ENCODE measurements at regions of chr9 and their contacts with region 1.

Region 1: GRCh38 chr9:19379697-19380046 is 364 bp downstream of the RPS6 start:
- DNase-seq: peak; percentile 16
- ATAC-seq: peak; percentile 28
- H3K4me3 ChIP-seq: peak overlapping the region; percentile 78
- H3K27ac ChIP-seq: peak overlapping the region; percentile 88
- H3K4me1 ChIP-seq: peaks cover 2% of the 10 kb centered on the region; the same call in 1 of the 2 replicates
- H3K27me3 ChIP-seq: no peaks in the 10 kb centered on the region
- CTCF ChIP-seq: no peak
- POLR2A ChIP-seq: no peak
- RAD21 ChIP-seq: no peak

Region 2: GRCh38 chr9:18806232-18807080 is 573.2 kb before region 1 on chr9:
- CTCF ChIA-PET with region 1: no interaction called
- POLR2A ChIA-PET with region 1: no interaction called
- dilution Hi-C with region 1: no loop called
- in situ Hi-C with region 1: no loop called
- intact Hi-C with region 1: no loop called
- DNase-seq: no peak
- ATAC-seq: no peak
- H3K4me3 ChIP-seq: no peak overlapping the region
- H3K27ac ChIP-seq: no peak overlapping the region
- H3K4me1 ChIP-seq: no peaks in the 10 kb centered on the region
- H3K27me3 ChIP-seq: no peaks in the 10 kb centered on the region
- CTCF ChIP-seq: no peak
- POLR2A ChIP-seq: no peak
- RAD21 ChIP-seq: no peak

Region 3: DNA sequence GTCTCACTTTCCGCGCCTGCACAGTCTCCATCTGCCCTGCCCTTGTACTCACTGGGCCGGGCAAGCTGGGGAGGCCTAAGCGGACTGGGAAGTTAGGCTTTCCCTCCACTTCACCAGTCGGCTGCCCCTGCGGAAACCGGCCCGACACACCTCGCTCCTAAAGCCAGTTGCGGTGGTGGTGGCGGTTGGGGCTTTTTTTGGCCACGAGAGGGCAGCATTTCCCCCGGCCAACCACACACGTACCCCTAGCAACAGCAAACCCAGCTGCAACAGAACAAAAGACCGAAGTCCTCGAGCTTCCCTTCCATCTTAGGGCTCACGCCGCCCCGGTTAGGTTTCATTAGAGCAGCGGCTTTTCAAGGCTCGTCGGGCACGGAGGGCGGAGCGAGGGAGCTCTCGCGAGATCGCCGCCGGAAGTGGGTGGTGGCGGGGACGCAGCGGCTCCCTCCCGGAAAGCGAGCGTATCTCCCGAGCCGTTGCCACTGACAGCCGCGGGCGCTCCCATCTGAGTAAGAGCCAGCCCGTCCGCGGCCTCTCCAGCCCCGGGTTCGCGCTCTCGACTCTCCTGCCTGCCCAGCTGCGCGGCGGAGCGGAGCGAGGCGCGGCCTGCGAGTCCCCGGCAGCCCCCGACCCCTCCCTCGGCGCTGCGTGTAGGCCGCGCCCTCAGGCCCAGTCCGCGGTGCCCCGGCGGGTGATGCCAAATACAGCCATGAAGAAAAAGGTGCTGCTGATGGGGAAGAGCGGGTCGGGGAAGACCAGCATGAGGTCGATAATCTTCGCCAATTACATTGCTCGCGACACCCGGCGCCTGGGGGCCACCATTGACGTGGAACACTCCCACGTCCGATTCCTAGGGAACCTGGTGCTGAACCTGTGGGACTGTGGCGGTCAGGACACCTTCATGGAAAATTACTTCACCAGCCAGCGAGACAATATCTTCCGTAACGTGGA is 330.4 kb before region 1 on chr9 and contains the start of gene RRAGA:
- CTCF ChIA-PET with region 1: no interaction called
- POLR2A ChIA-PET with region 1: no interaction called
- dilution Hi-C with region 1: no loop called
- in situ Hi-C with region 1: no loop called
- intact Hi-C with region 1: loop called (anchors 2 kb)
- DNase-seq: peak; percentile 96
- ATAC-seq: peak; percentile 93
- H3K4me3 ChIP-seq: peak within 1 kb of the TSS; percentile 74
- H3K27ac ChIP-seq: peak within 1 kb of the TSS; percentile 96
- H3K4me1 ChIP-seq: peaks cover 2% of the 10 kb centered on the region; the same call in 1 of the 2 replicates
- H3K27me3 ChIP-seq: no peaks in the 10 kb centered on the region
- CTCF ChIP-seq: peak; percentile 89
- POLR2A ChIP-seq: peak; percentile 97
- RAD21 ChIP-seq: peak; percentile 62
- total RNA-seq, gene RRAGA: 63.3 and 74.7 TPM in 2 replicates

Region 4: DNA sequence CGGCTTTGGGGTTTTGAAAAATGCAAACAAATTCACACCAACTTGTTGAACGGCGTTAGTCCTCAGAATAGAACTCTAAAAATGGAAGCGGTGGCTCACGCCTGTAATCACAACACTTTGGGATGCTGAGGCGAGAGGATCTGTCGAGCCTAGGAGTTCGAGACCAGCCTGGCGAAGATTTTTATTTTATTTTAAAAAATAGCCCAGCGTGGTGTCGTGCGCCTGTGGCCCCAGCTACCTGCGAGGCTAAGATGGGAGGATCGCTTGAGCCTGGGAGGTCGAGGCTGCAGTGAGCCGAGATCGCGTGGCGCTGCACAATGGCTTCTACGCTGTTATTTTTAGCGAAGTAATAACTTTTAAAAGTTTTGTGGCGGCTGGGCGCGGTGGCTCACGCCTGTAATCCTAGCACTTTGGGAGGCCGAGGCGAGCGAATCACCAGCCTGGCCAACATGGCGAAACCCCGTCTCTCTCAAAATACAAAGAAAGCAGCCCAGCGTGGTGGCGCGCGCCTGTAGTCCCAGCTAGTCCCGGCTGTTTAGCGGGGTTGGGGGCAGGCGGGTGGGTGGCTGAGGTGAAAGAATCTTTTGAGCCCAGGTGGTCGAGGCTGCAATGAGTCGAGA is 251.7 kb before region 1 on chr9:
- CTCF ChIA-PET with region 1: no interaction called
- POLR2A ChIA-PET with region 1: no interaction called
- dilution Hi-C with region 1: no loop called
- in situ Hi-C with region 1: no loop called
- intact Hi-C with region 1: loop called (anchors 10 kb)
- DNase-seq: no peak
- ATAC-seq: peak; percentile 27
- H3K4me3 ChIP-seq: peak overlapping the region; percentile 65
- H3K27ac ChIP-seq: peak overlapping the region; percentile 72
- H3K4me1 ChIP-seq: peaks cover 16% of the 10 kb centered on the region
- H3K27me3 ChIP-seq: no peaks in the 10 kb centered on the region
- CTCF ChIP-seq: no peak
- POLR2A ChIP-seq: no peak
- RAD21 ChIP-seq: no peak

Region 5: DNA sequence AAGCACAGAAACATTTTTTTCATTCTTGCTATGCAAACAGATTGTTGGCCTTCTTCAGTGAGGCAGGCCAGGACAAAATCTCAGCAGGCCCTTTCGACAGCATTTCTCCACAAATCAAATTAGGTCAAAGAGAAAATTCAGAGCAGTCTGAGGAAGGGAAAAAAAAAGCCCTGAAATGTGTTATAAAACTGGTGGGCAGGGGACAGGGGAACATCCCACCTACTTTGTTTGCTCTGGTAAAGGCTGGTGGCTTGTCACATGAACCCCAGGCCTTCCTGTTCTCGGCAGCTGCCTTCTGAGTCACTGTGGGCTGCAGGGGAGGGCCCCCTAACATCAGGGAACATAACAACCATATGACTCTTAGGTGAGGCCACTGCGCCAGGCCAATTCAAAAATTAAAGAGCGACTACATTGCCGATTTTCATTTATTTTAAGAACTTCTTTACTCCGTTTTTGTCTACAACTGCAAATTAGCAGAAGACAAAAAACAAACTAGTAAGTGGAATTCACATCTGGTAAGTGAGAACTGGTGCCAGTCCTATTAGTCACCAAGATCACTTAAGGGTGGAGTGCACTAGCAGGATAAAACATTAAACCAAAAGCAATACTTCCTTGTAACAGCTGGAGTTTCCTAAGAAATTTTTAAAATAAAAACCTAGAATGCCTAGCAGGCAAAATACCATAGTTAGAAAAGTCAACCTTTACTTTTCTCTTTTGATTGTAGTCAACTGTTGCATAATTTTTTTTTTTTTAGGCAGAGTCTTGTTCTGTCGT is 195.3 kb before region 1 on chr9:
- CTCF ChIA-PET with region 1: no interaction called
- POLR2A ChIA-PET with region 1: no interaction called
- dilution Hi-C with region 1: no loop called
- in situ Hi-C with region 1: no loop called
- intact Hi-C with region 1: loop called (anchors 5 kb)
- DNase-seq: peak; percentile 90
- ATAC-seq: peak; percentile 96
- H3K4me3 ChIP-seq: no peak overlapping the region; the same call in 1 of the 2 replicates
- H3K27ac ChIP-seq: peak overlapping the region; percentile 97
- H3K4me1 ChIP-seq: peaks cover 13% of the 10 kb centered on the region
- H3K27me3 ChIP-seq: no peaks in the 10 kb centered on the region
- CTCF ChIP-seq: no peak
- POLR2A ChIP-seq: no peak
- RAD21 ChIP-seq: no peak

Region 6: DNA sequence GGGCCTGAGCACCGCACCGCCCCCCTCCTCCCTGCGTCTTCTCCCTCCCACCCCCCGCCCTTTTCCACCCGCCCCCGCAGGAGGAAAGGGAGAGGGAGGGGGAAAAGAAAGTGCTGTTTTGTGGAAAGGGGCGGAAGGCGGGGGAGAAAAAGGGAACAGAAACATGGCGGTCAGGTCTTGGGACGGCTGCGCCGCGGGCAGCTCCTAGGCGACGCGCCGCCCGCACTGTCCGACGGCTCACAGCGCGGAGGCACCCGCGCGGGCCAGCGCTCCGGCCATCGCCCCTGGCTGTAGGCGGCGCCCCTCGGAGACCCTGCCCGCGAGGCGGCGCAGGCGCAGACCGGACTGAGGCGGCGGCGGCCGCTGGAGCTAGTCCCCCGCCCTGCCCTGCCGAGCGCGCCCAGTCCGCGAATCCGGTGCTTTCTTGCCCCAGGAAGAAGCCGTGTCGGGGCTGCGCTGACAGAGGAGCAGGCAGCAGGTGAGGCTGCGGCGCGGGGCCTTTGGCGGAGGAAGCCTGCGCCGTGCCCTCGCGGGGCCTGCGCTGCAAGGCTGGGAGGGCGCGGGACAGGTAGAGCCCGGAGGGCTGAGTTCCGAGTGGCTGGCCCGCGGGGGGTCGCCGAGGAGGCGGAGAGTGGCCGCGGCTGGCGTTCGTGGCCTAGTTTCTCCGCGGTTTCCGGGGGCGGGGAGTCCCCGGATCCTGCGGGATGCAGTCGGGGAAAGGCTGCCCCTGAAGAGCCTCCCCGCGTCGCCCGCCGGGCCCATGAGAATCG is 149.1 kb before region 1 on chr9 and contains the start of gene DENND4C:
- CTCF ChIA-PET with region 1: no interaction called
- POLR2A ChIA-PET with region 1: interaction called, 9 read pairs
- dilution Hi-C with region 1: no loop called
- in situ Hi-C with region 1: no loop called
- intact Hi-C with region 1: loop called (anchors 2 kb)
- DNase-seq: peak; percentile 78
- ATAC-seq: peak; percentile 92
- H3K4me3 ChIP-seq: peak within 1 kb of the TSS; percentile 97
- H3K27ac ChIP-seq: peak within 1 kb of the TSS; percentile 97
- H3K4me1 ChIP-seq: peaks cover 3% of the 10 kb centered on the region
- H3K27me3 ChIP-seq: no peaks in the 10 kb centered on the region
- CTCF ChIP-seq: peak; percentile 22; the same call in 1 of the 2 replicates
- POLR2A ChIP-seq: peak; percentile 81
- RAD21 ChIP-seq: no peak
- total RNA-seq, gene DENND4C: 32.6 and 48.0 TPM in 2 replicates

Region 7: DNA sequence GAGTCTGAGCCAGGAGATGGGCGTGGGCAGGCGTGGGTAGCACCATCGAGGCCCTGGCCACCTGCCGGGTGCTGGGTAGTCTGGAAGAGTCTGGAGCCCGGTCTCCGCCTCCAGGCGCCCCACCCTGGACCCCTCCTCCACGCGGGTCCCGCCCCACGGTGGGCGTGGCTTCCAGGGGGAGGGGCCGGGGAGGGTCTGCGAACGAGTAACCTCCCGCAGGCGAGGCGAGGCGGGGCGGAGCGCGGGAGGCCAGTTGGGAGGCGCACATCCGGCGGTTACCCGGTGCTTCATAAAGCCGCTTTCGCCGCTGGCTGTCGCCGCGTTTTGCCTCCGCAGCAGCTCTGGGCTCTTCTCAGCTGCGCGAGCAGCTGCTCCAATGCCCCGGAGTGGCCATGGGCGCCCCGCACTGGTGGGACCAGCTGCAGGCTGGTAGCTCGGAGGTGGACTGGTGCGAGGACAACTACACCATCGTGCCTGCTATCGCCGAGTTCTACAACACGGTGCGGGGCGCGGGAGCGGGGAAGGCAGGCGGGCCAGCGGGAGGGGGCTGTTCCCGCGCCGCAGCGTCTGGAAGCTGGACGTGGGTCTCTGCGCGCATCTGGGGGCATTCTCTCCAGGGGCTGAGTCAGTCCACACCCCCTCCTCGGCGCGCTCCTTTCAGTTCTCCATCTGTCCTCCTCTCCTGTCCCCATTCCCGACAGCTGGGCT is 29.2 kb after region 1 on chr9 and contains the start of gene ACER2:
- CTCF ChIA-PET with region 1: no interaction called
- POLR2A ChIA-PET with region 1: no interaction called
- dilution Hi-C with region 1: no loop called
- in situ Hi-C with region 1: no loop called
- intact Hi-C with region 1: loop called (anchors 2 kb)
- DNase-seq: peak; percentile 84
- ATAC-seq: peak; percentile 98
- H3K4me3 ChIP-seq: peak within 1 kb of the TSS; percentile 84
- H3K27ac ChIP-seq: peak within 1 kb of the TSS; percentile 44; the same call in 1 of the 2 replicates
- H3K4me1 ChIP-seq: no peaks in the 10 kb centered on the region
- H3K27me3 ChIP-seq: no peaks in the 10 kb centered on the region
- CTCF ChIP-seq: peak; percentile 19
- POLR2A ChIP-seq: peak; percentile 75
- RAD21 ChIP-seq: no peak
- total RNA-seq, gene ACER2: 1.6 and 1.9 TPM in 2 replicates

Measured in IMR-90 (cell line).